Activated CD8-positive, alpha-beta memory T cell treated with anti-CD3 and anti-CD28 coated beads, Interleukin-2, amount 10 ng/mL, durations not matched to agents 7 days and 5 days (primary cell): ENCODE measurements at regions of chr17 and their contacts with region 1.

Region 1: DNA sequence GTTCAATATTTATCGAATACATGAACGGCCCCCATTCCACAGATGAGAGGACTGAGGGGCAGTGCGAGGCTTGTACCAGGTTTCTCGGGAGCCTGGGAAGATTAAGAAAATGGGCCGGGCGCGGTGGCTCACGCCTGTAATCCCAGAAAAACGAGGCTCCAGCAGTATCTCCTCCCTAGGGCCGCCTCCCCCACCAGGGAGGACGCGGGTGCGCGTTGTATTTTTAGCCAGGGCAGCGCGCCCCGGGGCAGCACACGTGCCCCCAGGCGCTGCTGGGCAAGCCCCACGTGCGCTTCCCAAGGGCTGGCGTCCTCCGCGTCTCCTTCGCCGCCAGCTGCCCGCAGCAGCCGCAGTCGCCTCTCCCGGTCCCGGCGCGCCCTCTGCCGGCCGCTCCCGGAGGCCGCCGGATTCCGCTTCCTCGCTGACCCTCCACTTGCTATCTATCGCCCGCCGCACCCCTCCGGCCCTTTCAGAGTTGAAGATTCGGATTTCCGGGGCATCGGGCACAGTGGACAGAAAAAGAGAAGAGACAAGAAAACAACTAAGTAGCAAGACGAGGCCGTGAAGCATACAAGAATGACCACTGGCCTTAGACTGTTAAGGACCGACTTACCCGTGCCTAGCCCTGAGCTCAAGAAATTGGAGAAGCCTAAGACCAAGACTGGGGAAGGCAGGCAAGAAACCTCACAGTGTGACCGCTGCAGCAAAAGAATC is 1.9 kb upstream of the YBX2 start:
- DNase-seq: peak; percentile 71
- ATAC-seq: peak; percentile 37
- H3K4me3 Mint-ChIP-seq: no peak overlapping the region
- H3K27ac Mint-ChIP-seq: no peak overlapping the region
- H3K4me1 Mint-ChIP-seq: peaks cover 21% of the 10 kb centered on the region
- H3K27me3 Mint-ChIP-seq: peaks cover 46% of the 10 kb centered on the region

Region 2: DNA sequence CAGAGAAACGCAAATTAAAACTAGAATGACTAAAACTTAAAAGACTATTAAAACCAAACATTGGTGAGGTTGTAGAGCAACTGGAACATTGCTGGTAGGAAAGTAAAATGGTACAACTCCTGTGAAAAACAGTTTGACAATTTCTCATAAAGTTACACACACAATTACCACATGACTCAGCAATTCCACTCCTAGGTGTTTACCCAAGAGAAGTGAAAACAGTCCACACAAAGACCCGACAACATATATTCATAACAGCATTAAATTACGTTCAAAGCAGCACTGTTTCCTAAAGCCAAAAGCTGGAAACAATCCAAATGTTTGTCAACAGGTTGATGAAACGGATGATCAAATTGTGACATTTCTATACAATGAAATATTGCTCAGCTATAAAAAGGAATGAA is 327.0 kb before region 1 on chr17:
- CTCF ChIA-PET with region 1: no interaction called
- DNase-seq: no peak
- ATAC-seq: no peak
- H3K4me3 Mint-ChIP-seq: no peak overlapping the region
- H3K27ac Mint-ChIP-seq: no peak overlapping the region
- H3K4me1 Mint-ChIP-seq: peaks cover 5% of the 10 kb centered on the region
- H3K27me3 Mint-ChIP-seq: peaks cover 2% of the 10 kb centered on the region

Region 3: GRCh38 chr17:7214300-7215135 is 81.8 kb before region 1 on chr17:
- CTCF ChIA-PET with region 1: interaction called, 42 read pairs
- DNase-seq: peak; percentile 100
- ATAC-seq: peak; percentile 86
- H3K4me3 Mint-ChIP-seq: peak overlapping the region; percentile 77
- H3K27ac Mint-ChIP-seq: peak overlapping the region; percentile 88
- H3K4me1 Mint-ChIP-seq: peaks cover 49% of the 10 kb centered on the region
- H3K27me3 Mint-ChIP-seq: peaks cover 18% of the 10 kb centered on the region

Region 4: GRCh38 chr17:7219812-7220581 is 76.3 kb before region 1 on chr17 and contains the starts of genes ACADVL and DLG4:
- CTCF ChIA-PET with region 1: interaction called, 42 read pairs
- DNase-seq: peak; percentile 89
- ATAC-seq: peak; percentile 87
- H3K4me3 Mint-ChIP-seq: peak within 1 kb of the TSS; percentile 91
- H3K27ac Mint-ChIP-seq: peak within 1 kb of the TSS; percentile 91
- H3K4me1 Mint-ChIP-seq: peaks cover 44% of the 10 kb centered on the region
- H3K27me3 Mint-ChIP-seq: no peaks in the 10 kb centered on the region
- total RNA-seq, gene ACADVL: 411 to 423 TPM
- total RNA-seq, gene DLG4: 4.9 to 5.3 TPM

Region 5: DNA sequence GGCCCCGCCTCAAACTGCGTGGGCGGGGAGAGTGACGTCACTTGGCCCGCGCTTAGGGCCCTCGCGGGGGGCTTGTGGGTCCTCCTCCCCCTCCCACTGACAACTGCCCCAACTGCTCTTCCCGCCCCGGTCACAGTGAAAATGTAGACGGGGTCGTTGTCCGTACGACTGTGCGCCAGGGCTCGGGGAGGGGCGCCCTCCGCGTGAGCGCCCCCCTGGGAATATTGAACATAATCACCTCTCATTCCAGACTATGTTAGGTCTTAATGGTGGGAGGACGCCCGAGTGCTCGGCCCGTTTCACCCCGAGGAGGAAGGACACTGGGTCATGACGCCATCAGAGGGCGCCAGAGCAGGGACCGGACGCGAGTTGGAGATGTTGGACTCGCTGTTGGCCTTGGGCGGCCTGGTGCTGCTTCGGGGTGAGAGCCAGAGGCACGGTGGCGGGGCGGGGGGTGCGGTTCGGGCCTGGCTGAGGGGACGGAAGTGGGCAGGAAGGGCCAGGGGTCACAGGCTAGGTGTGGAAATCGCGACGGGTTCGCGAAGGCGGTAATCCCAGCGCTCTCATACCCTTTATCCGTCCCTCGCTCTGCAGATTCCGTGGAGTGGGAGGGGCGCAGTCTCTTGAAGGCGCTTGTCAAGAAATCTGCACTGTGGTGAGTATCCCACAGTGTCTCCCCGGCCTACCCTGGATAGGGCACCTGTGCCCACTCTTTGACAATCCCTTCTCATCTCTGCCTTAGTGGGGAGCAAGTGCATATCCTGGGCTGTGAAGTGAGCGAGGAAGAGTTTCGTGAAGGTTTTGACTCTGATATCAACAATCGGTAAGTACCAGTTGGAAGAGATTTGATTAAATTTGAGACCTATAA is 43.9 kb before region 1 on chr17 and contains the start of gene ELP5:
- CTCF ChIA-PET with region 1: interaction called, 12 read pairs
- DNase-seq: peak; percentile 96
- ATAC-seq: peak; percentile 73
- H3K4me3 Mint-ChIP-seq: peak within 1 kb of the TSS; percentile 91
- H3K27ac Mint-ChIP-seq: peak within 1 kb of the TSS; percentile 99
- H3K4me1 Mint-ChIP-seq: peaks cover 41% of the 10 kb centered on the region
- H3K27me3 Mint-ChIP-seq: no peaks in the 10 kb centered on the region
- total RNA-seq, gene ELP5: 56.5 to 70.4 TPM

Region 6: GRCh38 chr17:7280519-7281429 is 15.6 kb before region 1 on chr17:
- CTCF ChIA-PET with region 1: interaction called, 112 read pairs
- DNase-seq: peak; percentile 89
- ATAC-seq: peak; percentile 78
- H3K4me3 Mint-ChIP-seq: peak overlapping the region; percentile 63
- H3K27ac Mint-ChIP-seq: no peak overlapping the region
- H3K4me1 Mint-ChIP-seq: peaks cover 17% of the 10 kb centered on the region
- H3K27me3 Mint-ChIP-seq: peaks cover 22% of the 10 kb centered on the region

Region 7: GRCh38 chr17:7308625-7309433 is 12.5 kb after region 1 on chr17:
- CTCF ChIA-PET with region 1: interaction called, 20 read pairs
- DNase-seq: peak; percentile 92
- ATAC-seq: peak; percentile 31
- H3K4me3 Mint-ChIP-seq: peak overlapping the region; percentile 91
- H3K27ac Mint-ChIP-seq: peak overlapping the region; percentile 96
- H3K4me1 Mint-ChIP-seq: peaks cover 54% of the 10 kb centered on the region
- H3K27me3 Mint-ChIP-seq: no peaks in the 10 kb centered on the region

Region 8: DNA sequence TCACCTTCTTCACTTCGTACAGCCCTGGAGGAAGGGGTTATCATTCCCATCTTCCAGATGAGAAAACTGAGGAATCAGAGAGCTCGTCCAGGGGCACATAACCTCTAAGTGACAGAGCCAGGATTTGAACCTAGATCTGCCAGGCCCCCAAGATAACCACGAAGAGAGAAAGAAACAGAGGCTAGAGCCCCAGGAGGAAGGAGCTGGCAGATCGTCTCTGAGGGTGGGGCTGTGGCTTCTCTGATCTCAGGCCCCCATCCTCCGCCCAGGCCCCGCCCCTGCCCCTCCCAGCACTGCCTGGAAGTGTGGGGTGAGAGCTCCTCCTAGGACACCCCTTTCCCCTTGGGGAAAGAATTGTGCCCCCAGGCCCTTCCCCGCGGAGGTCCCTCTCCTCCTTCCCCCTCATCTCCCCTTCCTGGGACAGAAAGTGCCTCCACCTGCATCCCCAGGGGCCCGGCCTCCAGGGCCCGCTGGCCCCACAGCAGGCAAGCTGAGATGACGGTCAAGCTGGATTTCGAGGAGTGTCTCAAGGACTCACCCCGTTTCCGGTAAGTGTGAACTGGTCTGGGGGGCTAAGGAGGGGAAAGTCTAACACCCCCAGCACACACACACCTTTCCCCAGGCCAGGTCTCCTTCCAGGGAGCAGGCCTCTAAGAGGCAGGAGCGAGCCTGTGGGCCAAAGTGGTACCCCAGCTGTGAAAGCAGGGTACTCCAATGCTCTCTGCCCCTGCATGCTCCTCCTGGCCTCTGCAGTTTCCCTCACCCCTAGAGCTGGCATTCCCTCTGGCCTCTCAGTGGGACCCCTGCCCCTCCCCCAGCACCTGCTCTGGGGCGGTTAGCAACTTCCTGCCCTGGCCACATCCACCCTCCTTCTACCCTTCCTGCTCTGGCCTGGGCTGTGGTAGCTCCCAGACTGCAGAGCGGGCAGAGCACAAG is 40.2 kb after region 1 on chr17 and contains the start of gene ACAP1:
- CTCF ChIA-PET with region 1: interaction called, 12 read pairs
- DNase-seq: peak; percentile 96
- ATAC-seq: peak; percentile 95
- H3K4me3 Mint-ChIP-seq: peak within 1 kb of the TSS; percentile 93
- H3K27ac Mint-ChIP-seq: peak within 1 kb of the TSS; percentile 96
- H3K4me1 Mint-ChIP-seq: peaks cover 48% of the 10 kb centered on the region
- H3K27me3 Mint-ChIP-seq: no peaks in the 10 kb centered on the region
- total RNA-seq, gene ACAP1: 594 to 712 TPM